ENCODE measurements at regions of chr7 and their contacts with region 1.

Region 1: GRCh38 chr7:7182156-7183060 is at the start of gene C1GALT1:
- DNase-seq: peak; percentile 98
- H3K4me3 Mint-ChIP-seq: peak within 1 kb of the TSS; percentile 96
- H3K27ac Mint-ChIP-seq: peak within 1 kb of the TSS; percentile 99
- H3K4me1 Mint-ChIP-seq: peaks cover 27% of the 10 kb centered on the region
- H3K27me3 Mint-ChIP-seq: no peaks in the 10 kb centered on the region
- total RNA-seq, gene C1GALT1: 37.2 and 39.3 TPM in 2 replicates

Region 2: GRCh38 chr7:7103343-7104313 is 78.8 kb before region 1 on chr7:
- intact Hi-C with region 1: loop called (anchors 5 kb)
- DNase-seq: peak; percentile 57
- H3K4me3 Mint-ChIP-seq: no peak overlapping the region
- H3K27ac Mint-ChIP-seq: no peak overlapping the region
- H3K4me1 Mint-ChIP-seq: peaks cover 16% of the 10 kb centered on the region
- H3K27me3 Mint-ChIP-seq: no peaks in the 10 kb centered on the region

Region 3: GRCh38 chr7:7201578-7202374 is 19.4 kb after region 1 on chr7:
- intact Hi-C with region 1: loop called (anchors 2 kb)
- DNase-seq: peak; percentile 83
- H3K4me3 Mint-ChIP-seq: peak overlapping the region; percentile 79
- H3K27ac Mint-ChIP-seq: peak overlapping the region; percentile 75
- H3K4me1 Mint-ChIP-seq: peaks cover 66% of the 10 kb centered on the region
- H3K27me3 Mint-ChIP-seq: no peaks in the 10 kb centered on the region

Region 4: DNA sequence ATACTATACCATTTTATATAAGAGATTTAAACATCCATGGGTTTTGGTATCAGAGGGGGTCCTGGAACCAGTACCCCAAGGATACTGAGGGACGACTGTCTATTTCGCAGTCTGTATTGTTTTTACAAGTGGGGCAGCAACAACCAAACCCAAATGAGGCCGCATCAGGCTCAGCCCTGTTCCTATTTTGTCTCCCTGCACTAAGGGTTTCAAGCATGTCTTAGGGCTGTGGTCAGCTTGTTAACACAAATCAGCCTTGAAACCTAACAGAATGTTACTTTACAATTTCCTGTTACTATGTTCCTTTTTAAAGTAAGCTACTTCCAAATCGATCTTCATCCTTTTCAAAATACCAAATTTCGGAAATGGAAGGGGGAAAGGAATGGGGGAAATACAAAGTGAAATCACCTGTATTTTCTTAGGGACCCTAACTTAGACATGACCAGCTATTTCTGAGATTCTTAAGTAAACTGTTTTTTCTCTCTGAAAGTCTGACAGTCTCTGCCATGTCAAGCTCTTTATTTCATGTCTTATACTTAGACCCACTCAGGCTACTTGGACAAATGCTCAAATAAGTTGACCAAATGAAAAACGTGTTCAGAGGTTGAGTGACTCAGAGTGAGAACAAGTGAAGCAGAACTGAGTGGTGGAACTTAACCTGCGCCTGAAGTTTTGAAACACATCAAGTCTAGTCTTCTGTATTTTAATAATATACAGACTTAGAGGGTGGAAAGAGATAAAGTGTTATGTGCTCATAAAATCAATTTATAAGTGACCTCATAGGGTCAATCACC is 75.7 kb after region 1 on chr7:
- intact Hi-C with region 1: loop called (anchors 1 kb)
- DNase-seq: peak; percentile 67
- H3K4me3 Mint-ChIP-seq: peak overlapping the region; percentile 72
- H3K27ac Mint-ChIP-seq: peak overlapping the region; percentile 83
- H3K4me1 Mint-ChIP-seq: peaks cover 31% of the 10 kb centered on the region
- H3K27me3 Mint-ChIP-seq: no peaks in the 10 kb centered on the region

Region 5: GRCh38 chr7:7772397-7772821 is 590.0 kb after region 1 on chr7:
- intact Hi-C with region 1: loop called (anchors 2 kb)
- DNase-seq: peak; percentile 65
- H3K4me3 Mint-ChIP-seq: peak overlapping the region; percentile 49
- H3K27ac Mint-ChIP-seq: peak overlapping the region; percentile 73
- H3K4me1 Mint-ChIP-seq: peaks cover 12% of the 10 kb centered on the region
- H3K27me3 Mint-ChIP-seq: peaks cover 2% of the 10 kb centered on the region

Region 6: GRCh38 chr7:8531991-8532515 is 1349.6 kb after region 1 on chr7:
- intact Hi-C with region 1: no loop called
- DNase-seq: no peak
- H3K4me3 Mint-ChIP-seq: no peak overlapping the region
- H3K27ac Mint-ChIP-seq: no peak overlapping the region
- H3K4me1 Mint-ChIP-seq: no peaks in the 10 kb centered on the region
- H3K27me3 Mint-ChIP-seq: no peaks in the 10 kb centered on the region

Measured in activated CD4-positive, alpha-beta T cell treated with anti-CD3 and anti-CD28 coated beads, Interleukin-2, amount 10 ng/mL, durations not matched to agents 24 days and 14 days (primary cell).